Dorsolateral prefrontal cortex (tissue), 120 donors: ENCODE measurements at regions of chr7 and their contacts with region 1.

Region 1: GRCh38 chr7:80659120-80660055 is 20.9 kb downstream of the CD36 start:
- DNase-seq: no peak
- H3K4me3 ChIP-seq: no peak overlapping the region
- H3K27ac ChIP-seq: no peak overlapping the region
- H3K27me3 ChIP-seq: peaks cover 0 to 4% (median 0%) of the 10 kb centered on the region in 45 donors
- CTCF ChIP-seq: peak; percentile 44 to 92 (median 79)

Region 2: DNA sequence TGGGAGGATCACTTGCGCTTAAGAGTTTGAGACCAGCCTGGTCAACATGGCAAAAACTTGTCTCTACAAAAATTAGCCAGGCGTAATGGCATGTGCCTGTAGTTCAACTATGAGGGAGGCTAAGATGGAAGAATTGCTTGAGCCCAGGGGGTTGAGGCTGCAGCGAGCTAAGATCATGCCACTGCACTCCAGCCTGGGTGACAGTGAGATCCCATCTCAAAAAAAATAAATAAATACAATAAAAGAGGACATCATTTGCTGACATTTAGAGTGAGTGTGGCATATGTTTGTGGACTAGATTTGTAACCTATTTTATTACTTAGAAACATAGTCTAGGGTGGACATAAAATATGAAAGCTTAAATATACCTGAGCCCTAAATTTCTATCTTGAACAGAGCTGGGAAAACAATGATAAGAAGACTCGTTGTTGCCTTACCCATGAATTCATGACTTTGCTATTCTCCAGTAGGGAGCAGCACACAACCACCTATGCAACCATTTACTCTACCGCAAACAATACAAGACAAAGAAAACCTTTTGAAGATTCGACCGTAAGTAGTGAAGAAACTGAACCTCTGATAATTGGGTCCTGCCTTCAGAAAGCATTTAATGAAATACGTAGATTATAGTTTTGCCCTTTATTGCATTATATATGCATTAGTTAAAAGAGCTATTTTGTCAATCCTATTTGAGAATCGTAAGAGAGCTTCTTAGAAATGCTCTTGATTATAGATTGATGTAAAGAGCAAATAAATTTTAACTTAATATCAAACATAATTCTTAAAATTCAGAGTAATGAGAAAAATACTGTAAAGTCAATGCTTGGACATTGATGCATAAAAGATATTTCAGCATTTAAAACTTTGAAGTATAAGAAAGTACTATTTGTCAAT is 231.0 kb before region 1 on chr7:
- intact Hi-C with region 1: loop called (anchors 2 to 10 kb)
- DNase-seq: no peak
- H3K4me3 ChIP-seq: peak overlapping the region in 4 of 59 donors; percentile 8 to 28 (median 14)
- H3K27ac ChIP-seq: no peak overlapping the region
- H3K27me3 ChIP-seq: peaks cover 0 to 4% (median 0%) of the 10 kb centered on the region in 45 donors
- CTCF ChIP-seq: peak; percentile 9 to 83 (median 62)

Region 3: DNA sequence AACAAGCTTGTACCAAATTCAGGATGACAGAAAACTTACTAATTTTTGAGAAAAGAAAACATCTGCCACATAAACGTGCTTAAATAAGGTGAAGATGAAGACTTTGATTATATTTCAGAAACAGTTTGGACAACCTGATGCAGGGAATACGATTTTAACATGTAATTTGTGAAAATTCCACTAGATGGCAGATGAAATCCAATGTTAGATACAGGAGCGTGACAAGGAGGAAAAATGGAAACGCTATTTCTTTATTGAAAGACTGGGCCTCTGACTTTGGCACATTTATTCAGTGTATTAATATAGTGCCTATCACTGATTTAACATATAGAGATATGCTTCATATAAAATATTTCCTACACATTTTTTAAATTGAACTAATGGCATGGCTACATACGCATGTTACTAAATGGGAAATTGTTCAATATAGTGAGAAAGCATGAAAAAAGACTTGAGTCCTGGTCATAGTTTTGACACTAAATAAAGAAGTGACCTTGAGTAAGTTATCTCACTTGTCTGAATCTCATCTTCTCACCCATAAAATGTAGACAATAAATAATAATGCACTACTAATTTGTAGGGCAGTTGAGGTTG is 39.8 kb after region 1 on chr7:
- intact Hi-C with region 1: no loop called
- DNase-seq: no peak
- H3K4me3 ChIP-seq: no peak overlapping the region
- H3K27ac ChIP-seq: no peak overlapping the region
- H3K27me3 ChIP-seq: peaks cover 0 to 2% (median 0%) of the 10 kb centered on the region in 45 donors
- CTCF ChIP-seq: peak; percentile 58 to 98 (median 86)